ENCODE measurements at regions of chr3 and their contacts with region 1.

Region 1: DNA sequence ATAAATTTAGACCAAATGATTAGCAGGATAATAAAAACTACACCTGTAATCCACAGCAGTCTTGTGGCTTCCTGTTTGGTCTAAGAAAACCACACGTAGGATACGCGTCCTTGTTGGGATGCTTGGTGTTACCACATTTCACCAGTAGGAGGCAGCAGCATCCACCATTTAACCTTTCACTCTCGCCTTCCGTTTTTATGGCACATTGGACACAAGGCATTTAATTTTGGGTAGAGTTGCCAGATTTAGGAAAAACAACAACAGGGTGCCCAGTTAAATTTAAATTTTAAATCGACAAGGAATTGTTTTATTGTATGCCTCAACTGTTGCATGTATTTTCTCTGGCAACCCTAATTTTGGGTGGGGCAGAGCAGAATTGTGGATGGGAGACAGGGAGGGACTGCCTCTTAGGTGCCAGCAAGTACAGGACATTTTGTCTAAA is 6.3 kb downstream of the LRRC31 start:
- DNase-seq: peak; percentile 64 to 86 (median 76)
- ATAC-seq: peak; percentile 89
- H3K4me3 ChIP-seq: no peak overlapping the region
- H3K27ac ChIP-seq: no peak overlapping the region
- H3K4me1 ChIP-seq: no peaks in the 10 kb centered on the region; a peak in 1 of 5 replicates
- H3K27me3 ChIP-seq: no peaks in the 10 kb centered on the region
- CTCF ChIP-seq: peak; percentile 86 to 93 (median 89)
- EP300 ChIP-seq: no peak
- POLR2A ChIP-seq: no peak
- RAD21 ChIP-seq: peak; percentile 90 to 95

Region 2: GRCh38 chr3:169454823-169455222 is 408.7 kb before region 1 on chr3:
- CTCF ChIA-PET with region 1: no interaction called
- POLR2A ChIA-PET with region 1: no interaction called
- in situ Hi-C with region 1: no loop called
- intact Hi-C with region 1: no loop called
- DNase-seq: no peak
- ATAC-seq: no peak
- H3K4me3 ChIP-seq: no peak overlapping the region
- H3K27ac ChIP-seq: no peak overlapping the region
- H3K4me1 ChIP-seq: no peaks in the 10 kb centered on the region; a peak in 1 of 5 replicates
- H3K27me3 ChIP-seq: peaks cover 0 to 7% of the 10 kb centered on the region in 2 experiments; a peak in 1 of 5 replicates
- CTCF ChIP-seq: no peak
- EP300 ChIP-seq: no peak
- POLR2A ChIP-seq: no peak
- RAD21 ChIP-seq: no peak

Region 3: DNA sequence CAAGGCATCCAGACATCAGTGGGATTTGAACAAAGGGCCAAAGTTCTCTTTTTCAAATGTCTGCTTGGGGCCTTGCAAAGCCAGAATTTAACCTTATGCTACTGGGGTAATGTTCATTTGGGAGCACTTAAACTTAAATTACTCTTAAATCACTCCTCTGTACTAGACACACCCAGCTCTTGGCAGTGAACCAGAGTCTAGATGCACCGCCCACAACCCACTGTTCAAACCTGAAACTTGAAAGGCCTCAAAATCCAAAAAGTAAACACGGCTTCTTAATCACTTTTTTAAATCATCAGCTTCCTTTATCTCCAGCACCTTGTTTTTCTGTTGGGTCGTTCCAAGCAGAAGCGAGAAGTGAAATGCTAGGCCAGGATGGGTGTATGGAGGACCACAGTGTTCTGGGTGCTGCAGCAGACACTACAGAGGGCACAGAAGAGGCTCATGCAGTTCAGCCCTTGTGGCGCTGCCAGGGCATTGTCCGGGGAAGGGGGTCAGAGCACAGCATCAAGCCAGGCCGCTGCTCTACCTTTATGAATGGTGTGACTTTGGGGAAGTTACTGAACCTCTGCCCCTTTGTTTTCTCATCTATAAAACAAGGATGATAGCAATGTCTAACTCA is 228.8 kb before region 1 on chr3:
- CTCF ChIA-PET with region 1: no interaction called
- POLR2A ChIA-PET with region 1: no interaction called
- in situ Hi-C with region 1: no loop called
- intact Hi-C with region 1: no loop called
- DNase-seq: peak in 2 of 4 experiments; percentile 9 to 11
- ATAC-seq: peak; percentile 60; the same call in 2 of the 3 replicates
- H3K4me3 ChIP-seq: no peak overlapping the region
- H3K27ac ChIP-seq: no peak overlapping the region
- H3K4me1 ChIP-seq: no peaks in the 10 kb centered on the region
- H3K27me3 ChIP-seq: 0 out of 5 replicates have a peak, but pooled peaks cover 0 to 3% of the 10 kb centered on the region in 2 experiments
- CTCF ChIP-seq: no peak
- EP300 ChIP-seq: no peak
- POLR2A ChIP-seq: no peak
- RAD21 ChIP-seq: no peak

Region 4: GRCh38 chr3:169764452-169765274 is 98.8 kb before region 1 on chr3 and contains the start of gene TERC:
- CTCF ChIA-PET with region 1: no interaction called
- POLR2A ChIA-PET with region 1: no interaction called
- in situ Hi-C with region 1: no loop called
- intact Hi-C with region 1: loop called (anchors 1 kb)
- DNase-seq: peak; percentile 74 to 93 (median 82)
- ATAC-seq: peak; percentile 96
- H3K4me3 ChIP-seq: peak within 1 kb of the TSS; percentile 71
- H3K27ac ChIP-seq: peak within 1 kb of the TSS; percentile 95
- H3K4me1 ChIP-seq: peaks cover 6 to 20% of the 10 kb centered on the region in 2 experiments
- H3K27me3 ChIP-seq: no peaks in the 10 kb centered on the region
- CTCF ChIP-seq: no peak
- EP300 ChIP-seq: no peak
- POLR2A ChIP-seq: peak; percentile 96
- RAD21 ChIP-seq: peak in 1 of 2 experiments; percentile 14; a peak in 1 of 4 replicates
- polyA plus RNA-seq, gene TERC: not detected

Region 5: DNA sequence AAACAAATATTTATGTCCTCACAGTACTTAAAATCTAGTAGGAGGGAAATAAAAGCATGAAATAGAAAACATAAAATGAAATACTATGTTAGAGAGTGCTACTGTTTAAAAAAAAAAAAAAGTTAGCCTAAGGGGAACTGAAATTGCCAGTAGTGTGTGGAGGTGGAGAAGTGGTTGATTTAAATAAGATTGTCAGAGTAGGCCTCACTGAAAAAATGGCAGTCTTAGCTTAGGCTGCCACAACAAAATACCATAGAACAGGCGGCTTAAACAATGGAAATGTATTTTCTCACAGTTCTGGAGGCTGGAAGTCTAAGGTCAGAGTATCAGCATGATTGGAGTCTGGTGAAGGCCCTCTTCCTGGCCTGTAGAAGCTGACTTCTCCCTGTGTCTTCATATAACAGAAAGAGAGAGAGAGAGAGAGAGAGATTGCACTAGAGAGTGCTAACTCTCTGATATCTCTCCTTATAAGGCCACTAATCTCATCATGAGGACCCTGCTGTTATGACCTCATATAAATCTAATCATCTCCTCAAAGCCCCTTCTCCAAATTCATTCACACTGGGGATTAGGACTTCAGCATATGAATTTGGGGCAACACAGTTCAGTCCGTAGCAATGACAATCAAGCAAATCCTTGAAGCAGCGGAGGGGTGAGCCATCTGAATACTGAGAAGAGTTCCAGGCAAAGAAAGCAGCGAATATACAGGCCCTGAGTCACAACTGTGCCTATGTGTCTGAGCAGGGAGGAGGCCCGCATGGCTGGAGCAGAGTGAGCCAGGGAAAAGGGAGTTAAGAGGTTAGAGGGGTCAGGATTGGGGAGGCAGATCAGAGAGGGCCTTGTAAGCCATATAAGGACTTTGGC is 27.2 kb before region 1 on chr3:
- CTCF ChIA-PET with region 1: no interaction called
- POLR2A ChIA-PET with region 1: no interaction called
- in situ Hi-C with region 1: no loop called
- intact Hi-C with region 1: no loop called
- DNase-seq: no peak
- ATAC-seq: peak; percentile 57; the same call in 2 of the 3 replicates
- H3K4me3 ChIP-seq: no peak overlapping the region
- H3K27ac ChIP-seq: no peak overlapping the region
- H3K4me1 ChIP-seq: no peaks in the 10 kb centered on the region
- H3K27me3 ChIP-seq: peaks cover 0 to 6% of the 10 kb centered on the region in 2 experiments; a peak in 3 of 5 replicates
- CTCF ChIP-seq: no peak
- EP300 ChIP-seq: no peak
- POLR2A ChIP-seq: no peak
- RAD21 ChIP-seq: no peak

Region 6: DNA sequence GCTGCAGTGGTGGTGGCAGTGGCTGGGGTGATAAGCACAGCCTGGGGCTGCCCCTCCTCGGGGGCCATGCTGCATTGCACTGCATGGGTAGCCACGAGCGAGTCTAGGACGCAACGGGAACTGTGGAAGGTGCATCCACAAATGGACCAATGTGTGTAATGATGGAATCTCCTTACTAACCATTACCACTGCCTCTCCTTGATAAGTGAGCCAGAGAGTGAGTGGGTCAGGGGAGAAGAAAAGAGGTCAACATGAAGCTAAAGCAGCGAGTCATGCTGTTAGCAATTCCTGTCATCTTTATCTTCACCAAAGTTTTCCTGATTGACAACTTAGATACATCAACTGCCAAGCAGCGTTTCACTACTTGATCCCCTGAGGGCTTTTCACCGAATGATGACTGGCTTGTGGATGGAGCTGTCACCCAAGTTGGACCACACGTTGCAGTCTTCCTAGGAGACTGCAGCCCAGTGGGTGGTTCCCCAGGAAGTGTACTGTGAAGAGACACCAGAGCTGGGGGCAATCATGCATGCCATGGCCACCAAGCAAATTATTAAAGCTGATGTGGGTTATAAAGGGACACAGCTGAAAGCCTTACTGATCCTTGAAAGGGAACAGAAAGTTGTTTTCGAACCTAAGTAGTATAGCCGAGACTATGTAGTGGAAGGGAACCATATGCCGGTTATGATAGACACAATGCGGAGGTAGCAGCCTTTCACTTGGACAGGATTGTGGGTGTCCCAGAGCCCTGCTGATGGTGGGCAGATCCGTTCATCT is 68.5 kb after region 1 on chr3:
- CTCF ChIA-PET with region 1: interaction called, 3 read pairs
- POLR2A ChIA-PET with region 1: no interaction called
- in situ Hi-C with region 1: no loop called
- intact Hi-C with region 1: loop called (anchors 5 kb)
- DNase-seq: peak in 2 of 4 experiments; percentile 42 to 64
- ATAC-seq: peak; percentile 63
- H3K4me3 ChIP-seq: no peak overlapping the region
- H3K27ac ChIP-seq: no peak overlapping the region
- H3K4me1 ChIP-seq: peaks cover 5 to 23% of the 10 kb centered on the region in 2 experiments
- H3K27me3 ChIP-seq: no peaks in the 10 kb centered on the region
- CTCF ChIP-seq: no peak
- EP300 ChIP-seq: peak; percentile 62
- POLR2A ChIP-seq: no peak
- RAD21 ChIP-seq: no peak

Region 7: DNA sequence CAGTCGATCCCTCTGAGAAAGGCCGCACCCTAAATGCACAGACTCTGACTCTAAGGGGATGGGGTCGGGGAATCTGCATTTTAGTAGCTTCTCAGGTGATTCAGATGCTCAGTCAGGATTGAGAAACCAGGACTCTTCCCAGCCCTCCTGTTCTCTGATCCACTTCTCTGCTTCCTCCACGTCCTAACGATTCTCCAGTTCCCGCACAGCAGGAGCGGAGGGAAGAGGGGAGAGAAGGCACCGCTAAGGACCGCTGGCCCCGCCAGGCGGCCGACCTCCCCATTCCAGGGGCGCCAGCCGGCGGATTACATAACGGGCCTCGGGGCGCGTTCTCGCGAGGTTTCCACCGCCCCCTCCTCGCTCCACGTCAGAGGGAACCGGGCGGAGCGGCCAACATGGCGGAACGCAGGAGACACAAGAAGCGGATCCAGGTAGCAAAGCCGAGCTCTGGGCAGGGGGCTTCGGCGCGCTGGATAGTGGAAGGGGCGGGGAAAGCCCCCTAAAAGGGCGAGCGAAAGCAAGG is 103.0 kb after region 1 on chr3 and contains the start of gene SEC62:
- CTCF ChIA-PET with region 1: interaction called, 5 read pairs
- POLR2A ChIA-PET with region 1: interaction called, 3 read pairs
- in situ Hi-C with region 1: no loop called
- intact Hi-C with region 1: loop called (anchors 1 kb)
- DNase-seq: peak; percentile 93 to 96 (median 94)
- ATAC-seq: peak; percentile 92
- H3K4me3 ChIP-seq: peak within 1 kb of the TSS; percentile 69
- H3K27ac ChIP-seq: peak within 1 kb of the TSS; percentile 84
- H3K4me1 ChIP-seq: peaks cover 4 to 12% of the 10 kb centered on the region in 2 experiments; a peak in 4 of 5 replicates
- H3K27me3 ChIP-seq: no peaks in the 10 kb centered on the region
- CTCF ChIP-seq: peak; percentile 67 to 73 (median 73)
- EP300 ChIP-seq: no peak; the same call in 1 of the 2 replicates
- POLR2A ChIP-seq: peak; percentile 89
- RAD21 ChIP-seq: peak; percentile 82 to 91
- polyA plus RNA-seq, gene SEC62: 118 to 152 TPM

Region 8: DNA sequence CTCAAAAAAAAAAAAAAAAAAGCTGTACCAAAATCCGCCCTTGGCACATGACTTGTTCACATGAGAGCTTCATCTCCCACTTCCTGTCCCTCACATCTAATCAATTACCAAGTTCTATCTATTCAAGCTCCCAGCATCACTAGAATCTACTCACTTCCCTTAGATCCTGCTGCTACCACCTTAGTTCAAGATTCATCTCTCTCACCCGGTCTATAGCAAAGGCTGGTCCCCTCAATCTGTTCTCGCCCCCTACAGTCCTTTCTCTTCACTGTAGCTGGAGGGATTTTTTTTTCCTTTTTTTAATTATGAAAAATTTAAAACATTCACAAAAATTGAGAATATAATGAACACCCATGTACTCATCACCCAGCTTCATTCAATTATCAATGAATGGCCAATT is 157.6 kb after region 1 on chr3:
- CTCF ChIA-PET with region 1: interaction called, 3 read pairs
- POLR2A ChIA-PET with region 1: no interaction called
- in situ Hi-C with region 1: no loop called
- intact Hi-C with region 1: loop called (anchors 2 kb)
- DNase-seq: no peak
- ATAC-seq: peak; percentile 65; the same call in 2 of the 3 replicates
- H3K4me3 ChIP-seq: no peak overlapping the region
- H3K27ac ChIP-seq: no peak overlapping the region
- H3K4me1 ChIP-seq: no peaks in the 10 kb centered on the region; a peak in 1 of 5 replicates
- H3K27me3 ChIP-seq: peaks cover 2 to 8% of the 10 kb centered on the region in 2 experiments; a peak in 2 of 5 replicates
- CTCF ChIP-seq: peak; percentile 10 to 40 (median 19); a peak in 2 of 6 replicates
- EP300 ChIP-seq: no peak
- POLR2A ChIP-seq: no peak
- RAD21 ChIP-seq: peak in 1 of 2 experiments; percentile 37; a peak in 1 of 4 replicates

Region 9: GRCh38 chr3:170054204-170054603 is 190.7 kb after region 1 on chr3:
- CTCF ChIA-PET with region 1: interaction called, 3 read pairs
- POLR2A ChIA-PET with region 1: no interaction called
- in situ Hi-C with region 1: no loop called
- intact Hi-C with region 1: loop called (anchors 1 kb)
- DNase-seq: peak in 2 of 4 experiments; percentile 32 to 37
- ATAC-seq: peak; percentile 83
- H3K4me3 ChIP-seq: no peak overlapping the region
- H3K27ac ChIP-seq: no peak overlapping the region
- H3K4me1 ChIP-seq: no peaks in the 10 kb centered on the region; a peak in 1 of 5 replicates
- H3K27me3 ChIP-seq: no peaks in the 10 kb centered on the region
- CTCF ChIP-seq: peak; percentile 33 to 56 (median 51); a peak in 3 of 6 replicates
- EP300 ChIP-seq: no peak
- POLR2A ChIP-seq: no peak
- RAD21 ChIP-seq: peak in 1 of 2 experiments; percentile 71; a peak in 3 of 4 replicates

Region 10: GRCh38 chr3:170307671-170308403 is 444.4 kb after region 1 on chr3:
- CTCF ChIA-PET with region 1: no interaction called
- POLR2A ChIA-PET with region 1: no interaction called
- in situ Hi-C with region 1: no loop called
- intact Hi-C with region 1: loop called (anchors 10 kb)
- DNase-seq: peak in 1 of 4 experiments; percentile 17
- ATAC-seq: peak; percentile 43; the same call in 2 of the 3 replicates
- H3K4me3 ChIP-seq: no peak overlapping the region
- H3K27ac ChIP-seq: no peak overlapping the region; the same call in 2 of the 3 replicates
- H3K4me1 ChIP-seq: peaks cover 0 to 5% of the 10 kb centered on the region in 2 experiments; a peak in 1 of 5 replicates
- H3K27me3 ChIP-seq: no peaks in the 10 kb centered on the region
- CTCF ChIP-seq: no peak
- EP300 ChIP-seq: no peak
- POLR2A ChIP-seq: no peak
- RAD21 ChIP-seq: no peak

Region 11: DNA sequence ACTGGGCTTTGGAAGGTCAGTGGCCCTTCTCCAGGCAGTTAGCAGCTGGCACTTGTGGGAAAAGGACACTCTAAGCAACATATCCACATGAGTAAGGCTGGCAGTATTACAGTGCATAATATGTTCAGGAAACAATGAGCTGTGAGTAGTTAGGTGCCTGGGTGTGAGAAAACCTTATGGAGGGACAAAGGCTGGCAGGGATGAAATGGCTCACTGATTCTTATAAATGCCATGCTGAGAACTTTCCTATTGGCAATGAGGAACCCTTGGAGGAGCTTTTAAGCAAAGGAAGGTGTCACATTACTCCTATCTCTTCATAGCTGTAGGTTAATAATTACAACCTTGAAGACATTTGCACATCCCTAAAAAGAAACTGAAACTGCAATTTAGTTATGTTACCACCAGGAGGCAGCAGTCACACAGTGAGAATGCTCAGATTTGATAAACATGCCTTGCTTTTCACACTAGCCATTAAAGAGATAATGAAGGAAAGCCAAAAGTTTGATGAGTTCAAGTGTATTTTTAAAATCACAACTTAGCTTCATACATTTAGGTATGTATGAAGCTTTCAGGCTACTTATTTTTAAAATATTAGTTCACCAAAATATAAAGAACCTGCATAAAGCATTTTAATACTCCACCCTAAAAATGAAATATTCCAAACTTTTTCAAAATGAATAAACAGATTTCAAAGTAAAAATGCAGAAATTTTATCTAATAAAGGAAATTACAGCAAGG is 1299.7 kb after region 1 on chr3:
- CTCF ChIA-PET with region 1: no interaction called
- POLR2A ChIA-PET with region 1: no interaction called
- in situ Hi-C with region 1: no loop called
- intact Hi-C with region 1: no loop called
- DNase-seq: peak; percentile 27 to 56 (median 40)
- ATAC-seq: no peak
- H3K4me3 ChIP-seq: no peak overlapping the region
- H3K27ac ChIP-seq: no peak overlapping the region
- H3K4me1 ChIP-seq: peaks cover 11 to 23% of the 10 kb centered on the region in 2 experiments
- H3K27me3 ChIP-seq: no peaks in the 10 kb centered on the region
- CTCF ChIP-seq: peak; percentile 54 to 67 (median 67); a peak in 5 of 6 replicates
- EP300 ChIP-seq: no peak
- POLR2A ChIP-seq: no peak
- RAD21 ChIP-seq: peak; percentile 69 to 81